Pancreas (tissue), 10 donors: ENCODE measurements at regions of chr5 and their contacts with region 1.

Region 1: DNA sequence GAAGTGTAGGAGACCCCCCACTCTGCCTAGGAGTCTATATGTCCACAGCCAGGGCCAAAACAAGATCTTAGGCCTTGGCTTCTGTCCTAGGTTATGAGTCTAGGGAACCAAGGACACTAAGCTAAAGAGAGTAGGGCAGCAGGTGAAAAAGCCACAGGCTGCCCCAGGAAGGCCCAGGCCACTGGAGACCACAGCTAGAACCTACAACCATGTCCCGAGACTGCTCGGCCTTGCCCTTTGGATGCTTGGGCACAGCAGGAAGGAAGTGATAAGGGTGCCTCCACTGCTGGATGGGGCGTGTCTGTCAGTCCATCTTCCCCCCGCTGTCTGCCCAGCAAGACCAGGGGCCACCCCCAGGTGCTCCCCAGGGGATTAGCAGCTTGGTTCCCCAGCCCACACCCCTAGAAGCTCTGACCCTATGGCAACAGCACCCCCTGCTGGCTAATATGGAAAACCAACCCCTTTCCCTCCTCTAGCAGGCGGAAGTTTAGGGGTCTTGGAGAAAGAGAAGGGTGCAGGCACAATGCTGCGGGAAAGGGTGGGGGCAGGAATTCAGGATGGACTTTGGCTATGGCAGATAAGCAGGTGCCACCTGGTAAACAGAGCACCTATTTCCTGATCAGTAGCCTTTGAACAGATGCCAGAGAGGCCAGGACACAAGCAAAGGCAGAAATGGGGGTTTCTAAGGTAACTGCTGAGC is 10.5 kb upstream of the IRF1 start:
- DNase-seq: peak in 5 of 6 donors; percentile 53 to 70 (median 61)
- ATAC-seq: peak; percentile 8 to 22 (median 17)
- H3K4me3 ChIP-seq: no peak overlapping the region
- H3K27ac ChIP-seq: peak overlapping the region; percentile 19 to 97 (median 76)
- H3K4me1 ChIP-seq: peaks cover 15 to 53% (median 24%) of the 10 kb centered on the region in 3 donors
- H3K27me3 ChIP-seq: no peaks in the 10 kb centered on the region
- CTCF ChIP-seq: peak; percentile 55 to 82 (median 78)

Region 2: DNA sequence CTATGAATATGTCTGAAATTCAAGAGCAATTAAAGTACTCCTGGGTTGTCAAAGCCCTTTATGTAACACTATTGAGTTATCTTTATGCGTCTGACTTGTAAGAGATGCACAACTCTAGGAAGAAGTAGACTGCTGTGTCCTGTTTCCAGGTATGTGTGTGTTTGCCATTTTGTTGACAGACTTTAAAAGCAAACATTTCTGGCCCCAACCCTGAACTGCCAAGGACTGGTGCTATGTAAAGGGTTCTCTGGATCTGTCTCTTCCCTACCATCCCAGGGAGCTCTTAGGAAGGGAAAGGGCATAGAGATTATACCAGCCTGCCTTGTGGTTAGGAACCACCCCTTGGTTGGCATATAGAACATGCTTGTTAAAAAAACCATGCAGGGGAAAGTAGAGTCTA is 119.5 kb before region 1 on chr5:
- intact Hi-C with region 1: loop called in 2 of 3 experiments (anchors 2 to 10 kb)
- DNase-seq: no peak
- ATAC-seq: no peak
- H3K4me3 ChIP-seq: no peak overlapping the region
- H3K27ac ChIP-seq: no peak overlapping the region
- H3K4me1 ChIP-seq: peaks cover 0 to 4% (median 3%) of the 10 kb centered on the region in 3 donors
- H3K27me3 ChIP-seq: no peaks in the 10 kb centered on the region
- CTCF ChIP-seq: no peak

Region 3: DNA sequence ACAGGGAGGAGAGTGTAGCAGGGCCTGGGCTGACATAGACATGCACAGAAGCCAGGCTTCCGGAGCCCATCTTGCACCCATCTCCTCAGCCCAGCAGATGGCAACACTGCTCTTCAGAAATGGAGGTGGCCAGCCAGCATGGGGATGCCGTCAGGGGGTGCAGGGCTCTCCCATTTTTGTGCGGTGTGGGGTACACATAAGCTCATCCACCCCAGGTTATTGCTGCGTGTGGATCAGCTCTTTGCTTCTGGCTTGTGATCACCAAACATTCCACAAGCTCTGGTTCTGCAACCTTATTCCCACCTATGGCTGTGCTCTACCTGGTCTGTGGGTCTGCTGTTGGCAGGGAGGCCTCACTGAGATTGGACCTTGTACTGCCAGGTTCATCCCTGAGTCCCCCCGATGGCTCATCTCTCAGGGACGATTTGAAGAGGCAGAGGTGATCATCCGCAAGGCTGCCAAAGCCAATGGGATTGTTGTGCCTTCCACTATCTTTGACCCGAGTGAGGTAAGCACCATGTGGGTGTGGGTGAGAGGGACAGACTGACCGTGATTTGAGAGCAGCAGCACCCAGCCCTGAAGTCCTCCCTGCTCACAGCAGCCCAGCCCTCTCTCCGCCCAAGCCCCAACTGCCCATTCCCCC is 114.3 kb before region 1 on chr5:
- intact Hi-C with region 1: loop called in 2 of 3 experiments (anchors 2 to 10 kb)
- DNase-seq: peak in 5 of 6 donors; percentile 45 to 76 (median 61)
- ATAC-seq: peak; percentile 59 to 89 (median 80)
- H3K4me3 ChIP-seq: no peak overlapping the region
- H3K27ac ChIP-seq: peak overlapping the region; percentile 40 to 96 (median 66)
- H3K4me1 ChIP-seq: peaks cover 0 to 33% (median 8%) of the 10 kb centered on the region in 3 donors
- H3K27me3 ChIP-seq: no peaks in the 10 kb centered on the region
- CTCF ChIP-seq: peak; percentile 8 to 53 (median 36)